GM13977 (cell line): ENCODE measurements at regions of chr6 and their contacts with region 1.

Region 1: DNA sequence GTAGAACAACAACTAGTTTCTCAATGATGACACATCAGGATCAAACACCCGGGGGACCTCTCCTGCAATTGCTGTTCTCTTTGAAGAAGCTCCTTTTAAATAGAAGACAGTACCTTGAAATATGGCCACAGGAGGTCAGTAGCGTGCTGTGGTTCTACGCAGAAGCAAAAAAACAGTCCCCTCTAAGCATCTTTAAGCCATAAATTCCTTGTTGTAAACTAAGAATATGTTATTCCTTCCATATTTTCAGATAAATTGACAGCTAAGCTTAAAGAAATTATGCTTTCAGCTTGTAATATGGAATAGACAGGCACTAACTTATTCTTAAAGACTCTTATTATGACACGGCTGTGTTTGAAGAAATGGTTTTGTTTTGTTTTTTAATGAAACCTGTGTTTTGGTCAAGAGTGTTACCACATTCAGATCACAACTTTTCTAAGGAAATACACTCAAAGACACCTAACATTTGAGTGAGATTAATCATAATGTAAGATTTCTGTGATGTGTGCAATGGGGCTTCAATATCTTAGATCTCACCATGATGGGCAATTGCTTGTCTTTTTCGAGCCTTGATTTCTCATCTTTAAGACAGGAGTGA is 49.7 kb upstream of the IL20RA start:
- DNase-seq: peak; percentile 21
- CTCF ChIP-seq: peak; percentile 73

Region 2: DNA sequence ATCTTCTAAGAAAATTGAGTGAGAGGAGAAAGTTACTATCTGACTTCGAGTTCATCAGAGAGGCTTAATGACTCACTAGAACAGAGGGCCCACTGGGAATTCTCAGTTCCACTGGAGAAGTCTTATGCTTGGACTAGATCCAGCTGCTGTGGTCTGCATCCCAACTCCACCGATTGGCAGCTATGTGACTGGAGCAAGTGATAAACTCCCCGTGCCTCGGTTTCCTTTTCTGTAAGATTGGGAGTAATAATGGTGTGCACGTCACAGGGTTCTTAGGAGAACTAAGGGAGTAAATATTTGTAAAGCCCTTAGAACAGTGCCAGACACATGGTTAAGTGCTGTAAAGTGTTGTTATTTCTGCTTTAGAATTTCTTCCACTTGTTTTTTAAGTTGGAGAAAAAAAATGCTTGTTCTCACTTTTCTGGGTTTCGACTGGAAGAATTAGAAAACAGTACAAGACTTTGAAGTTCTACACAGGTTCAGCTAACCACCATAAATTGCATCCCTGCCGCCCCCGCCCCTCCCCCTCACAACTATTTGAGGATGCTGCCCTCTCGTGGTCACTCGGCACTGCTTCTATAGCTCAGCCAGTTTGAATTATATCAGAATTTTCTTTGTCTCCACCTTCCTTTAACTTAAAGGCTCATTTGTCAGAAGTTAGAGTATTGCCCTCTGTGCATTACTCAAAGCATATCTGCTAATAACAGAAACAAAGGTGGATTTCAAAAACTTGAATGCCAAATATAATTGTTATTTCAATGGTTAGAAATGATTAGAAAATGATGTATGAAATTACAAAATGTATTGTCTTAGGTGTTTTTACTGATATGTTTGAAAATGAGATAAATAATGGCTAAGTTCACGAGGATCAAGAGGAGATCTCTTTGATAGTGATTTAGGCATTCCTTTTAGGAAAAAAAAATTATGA is 219.7 kb after region 1 on chr6:
- in situ Hi-C with region 1: loop called (anchors 10 kb)
- DNase-seq: peak; percentile 52
- CTCF ChIP-seq: peak; percentile 86

Region 3: GRCh38 chr6:137536104-137536773 is 441.7 kb after region 1 on chr6:
- in situ Hi-C with region 1: no loop called
- DNase-seq: no peak
- CTCF ChIP-seq: no peak